Sigmoid colon (tissue), 7 donors: ENCODE measurements at regions of chr5 and their contacts with region 1.

Region 1: GRCh38 chr5:173944511-173944910 is 44.5 kb upstream of the C5orf47 start:
- DNase-seq: no peak
- H3K4me3 ChIP-seq: no peak overlapping the region
- H3K27ac ChIP-seq: no peak overlapping the region
- H3K4me1 ChIP-seq: peaks cover 0 to 28% (median 19%) of the 10 kb centered on the region in 4 donors
- H3K27me3 ChIP-seq: no peaks in the 10 kb centered on the region
- CTCF ChIP-seq: no peak
- EP300 ChIP-seq: no peak
- POLR2A ChIP-seq: no peak

Region 2: DNA sequence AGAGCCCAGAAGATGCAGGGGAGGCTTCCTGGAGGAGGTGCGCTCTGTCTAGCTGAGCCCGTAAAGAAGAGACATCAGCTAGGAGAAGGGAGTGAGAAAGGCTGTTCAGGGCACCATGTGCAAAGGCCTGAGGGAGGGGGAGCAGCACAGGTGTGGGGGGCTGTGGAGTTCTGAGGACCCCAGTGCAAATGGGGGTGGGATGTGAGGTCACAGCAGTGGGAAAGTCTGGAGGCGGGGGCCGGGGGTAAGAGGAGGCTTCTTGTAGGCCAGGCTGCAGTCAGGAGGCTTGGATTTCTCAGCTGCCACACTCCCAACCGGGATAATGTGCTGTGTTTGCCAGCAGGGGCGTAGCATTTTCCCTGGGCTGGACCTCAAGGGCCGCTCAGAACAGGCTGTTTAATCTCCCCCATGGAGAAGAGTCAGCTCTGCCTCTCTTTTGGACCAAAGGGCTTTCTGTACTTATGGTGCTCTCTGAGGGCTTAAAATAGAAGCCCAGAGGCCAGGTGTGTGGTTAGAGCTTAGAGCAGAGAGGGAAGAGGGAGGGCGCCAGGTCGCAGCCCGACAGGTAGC is 1297.7 kb before region 1 on chr5:
- intact Hi-C with region 1: no loop called
- DNase-seq: peak; percentile 92
- H3K4me3 ChIP-seq: no peak overlapping the region
- H3K27ac ChIP-seq: peak overlapping the region; percentile 94 to 99 (median 96)
- H3K4me1 ChIP-seq: peaks cover 0 to 98% (median 93%) of the 10 kb centered on the region in 4 donors
- H3K27me3 ChIP-seq: no peaks in the 10 kb centered on the region
- CTCF ChIP-seq: peak; percentile 43 to 66 (median 54)
- EP300 ChIP-seq: peak in 2 of 4 donors; percentile 15 to 61
- POLR2A ChIP-seq: no peak

Region 3: DNA sequence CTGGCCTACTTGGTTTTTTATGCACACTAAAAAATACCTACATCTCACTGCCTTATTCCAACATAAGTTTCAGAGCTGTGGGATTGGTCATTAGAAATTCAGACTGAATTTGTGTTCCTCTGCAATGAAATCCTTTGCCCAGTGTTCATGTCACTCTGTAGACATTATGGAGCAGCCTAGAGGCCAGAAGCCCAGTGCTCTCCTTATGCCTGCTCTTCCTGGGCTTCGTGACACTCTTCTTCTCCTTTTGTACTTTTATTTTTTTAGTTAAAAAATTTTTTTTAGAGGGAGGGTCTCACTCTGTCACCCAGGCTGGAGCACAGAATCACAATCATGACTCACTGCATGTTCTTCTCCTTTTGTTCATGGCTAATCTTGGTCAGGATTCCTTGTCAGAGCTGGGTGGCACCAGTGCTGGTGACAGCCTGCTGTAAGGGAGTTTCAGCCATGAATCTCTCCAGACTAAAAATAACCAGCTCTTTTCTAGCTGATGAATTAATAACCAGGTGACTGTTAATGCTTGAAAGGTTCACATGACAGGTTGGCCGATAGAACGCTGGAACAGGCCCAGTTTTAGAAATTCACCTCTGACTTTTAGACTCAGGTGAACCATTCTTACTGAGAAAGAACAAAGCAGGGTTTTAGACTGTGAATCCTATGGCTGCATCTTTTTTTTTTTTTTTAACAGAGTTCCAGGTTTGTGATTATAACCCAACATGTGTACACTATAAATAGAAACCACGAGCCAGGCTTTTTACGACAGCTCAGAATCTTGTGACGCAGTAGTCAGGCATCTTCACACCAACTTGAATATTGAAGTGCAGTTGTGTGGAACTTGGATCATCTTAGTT is 10.4 kb after region 1 on chr5:
- intact Hi-C with region 1: loop called (anchors 1 kb)
- DNase-seq: peak; percentile 74
- H3K4me3 ChIP-seq: no peak overlapping the region
- H3K27ac ChIP-seq: peak overlapping the region; percentile 62 to 85 (median 74)
- H3K4me1 ChIP-seq: peaks cover 0 to 22% (median 15%) of the 10 kb centered on the region in 4 donors
- H3K27me3 ChIP-seq: no peaks in the 10 kb centered on the region
- CTCF ChIP-seq: no peak
- EP300 ChIP-seq: peak; percentile 8 to 85 (median 72)
- POLR2A ChIP-seq: peak in 1 of 2 donors; percentile 9

Region 4: DNA sequence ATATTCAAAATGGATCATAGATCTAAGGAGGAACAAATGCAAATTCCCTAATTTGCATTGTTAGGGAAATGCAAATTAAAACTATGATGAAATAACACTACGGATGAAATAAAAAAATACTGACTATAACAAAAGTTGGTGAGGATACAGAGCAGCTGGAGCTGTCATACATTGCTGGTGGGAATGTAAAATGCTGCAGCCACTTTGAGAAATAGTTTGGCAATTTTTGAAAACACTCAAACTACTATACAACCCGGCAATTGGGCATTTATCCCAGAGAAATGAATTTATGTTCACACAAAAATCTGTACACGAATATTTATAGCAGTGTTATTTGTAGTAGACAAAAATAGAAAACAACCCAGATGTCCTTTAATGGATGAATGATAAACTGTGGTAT is 66.9 kb after region 1 on chr5:
- intact Hi-C with region 1: no loop called
- DNase-seq: no peak
- H3K4me3 ChIP-seq: no peak overlapping the region
- H3K27ac ChIP-seq: no peak overlapping the region
- H3K4me1 ChIP-seq: no peaks in the 10 kb centered on the region
- H3K27me3 ChIP-seq: no peaks in the 10 kb centered on the region
- CTCF ChIP-seq: no peak
- EP300 ChIP-seq: no peak
- POLR2A ChIP-seq: no peak